Psoas muscle (tissue), 8 donors: ENCODE measurements at regions of chr9 and their contacts with region 1.

Region 1: GRCh38 chr9:114177423-114178064 is 22.2 kb downstream of the COL27A1 start:
- DNase-seq: no peak
- ATAC-seq: peak in 2 of 4 donors; percentile 17 to 42
- H3K4me3 ChIP-seq: no peak overlapping the region
- H3K27ac ChIP-seq: peak overlapping the region; percentile 77
- H3K4me1 ChIP-seq: peaks cover 71% of the 10 kb centered on the region
- H3K27me3 ChIP-seq: no peaks in the 10 kb centered on the region
- CTCF ChIP-seq: no peak

Region 2: GRCh38 chr9:114207034-114207810 is 29.7 kb after region 1 on chr9:
- intact Hi-C with region 1: loop called in 1 of 2 experiments (anchors 2 kb)
- DNase-seq: peak; percentile 81 to 93
- ATAC-seq: peak; percentile 87 to 91 (median 88)
- H3K4me3 ChIP-seq: no peak overlapping the region
- H3K27ac ChIP-seq: peak overlapping the region; percentile 88
- H3K4me1 ChIP-seq: peaks cover 52% of the 10 kb centered on the region
- H3K27me3 ChIP-seq: no peaks in the 10 kb centered on the region
- CTCF ChIP-seq: no peak